MCF 10A (cell line): ENCODE measurements at regions of chr2 and their contacts with region 1.

Region 1: DNA sequence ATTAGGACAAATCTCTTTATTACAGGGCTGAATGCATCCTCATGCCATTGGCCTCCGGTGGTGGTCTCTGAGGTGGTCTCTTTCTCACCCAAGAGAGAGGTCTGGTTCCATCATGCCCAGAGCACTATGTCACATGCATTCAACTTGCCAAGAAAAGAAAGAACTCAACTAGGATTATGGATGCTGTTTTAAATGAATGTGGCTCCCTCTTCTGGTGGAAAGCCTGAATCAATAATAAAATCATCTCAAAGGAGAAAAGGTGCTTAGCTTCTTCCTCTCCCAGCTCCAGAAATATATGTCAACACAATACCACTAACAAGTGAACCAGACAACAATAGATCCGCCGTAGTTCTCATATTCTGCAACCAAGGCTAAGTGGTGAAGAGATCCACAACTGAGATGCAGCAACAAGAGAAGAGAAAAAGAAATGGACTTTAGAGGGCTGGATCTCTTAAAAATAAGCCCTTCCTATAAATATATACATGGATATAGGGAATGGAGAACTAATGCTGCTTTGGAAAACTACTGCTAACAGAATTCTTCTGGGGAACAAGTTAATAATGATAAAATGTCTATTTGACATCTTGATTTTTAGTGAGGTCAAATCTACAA is 396.8 kb downstream of the NCKAP5 start:
- DNase-seq: peak; percentile 62
- H3K4me3 Mint-ChIP-seq: no peak overlapping the region
- H3K27ac Mint-ChIP-seq: no peak overlapping the region
- H3K4me1 Mint-ChIP-seq: no peaks in the 10 kb centered on the region
- H3K27me3 Mint-ChIP-seq: peaks cover 10% of the 10 kb centered on the region
- CTCF ChIP-seq: peak; percentile 57

Region 2: DNA sequence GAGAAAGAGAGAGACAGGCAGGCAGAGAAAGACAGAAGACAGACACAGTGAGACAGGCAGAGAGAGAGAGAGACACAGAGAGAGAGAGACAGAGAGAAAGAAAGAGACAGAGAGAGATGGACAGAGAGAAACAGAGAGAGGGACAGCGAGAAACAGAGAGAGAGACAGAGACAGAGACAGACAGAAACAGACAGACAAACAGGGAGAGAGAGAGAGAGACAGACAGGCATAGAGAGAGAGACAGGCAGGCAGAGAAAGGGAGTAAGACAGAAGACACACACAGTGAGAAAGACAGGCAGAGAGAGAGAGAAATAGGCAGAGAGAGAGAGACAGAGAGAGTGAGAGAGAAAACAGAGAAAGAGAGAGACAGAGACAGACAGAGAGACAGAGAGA is 904.4 kb before region 1 on chr2:
- CTCF ChIA-PET with region 1: interaction called, 7 read pairs
- POLR2A ChIA-PET with region 1: no interaction called
- intact Hi-C with region 1: loop called (anchors 1 kb)
- DNase-seq: no peak
- H3K4me3 Mint-ChIP-seq: no peak overlapping the region
- H3K27ac Mint-ChIP-seq: no peak overlapping the region
- H3K4me1 Mint-ChIP-seq: no peaks in the 10 kb centered on the region
- H3K27me3 Mint-ChIP-seq: no peaks in the 10 kb centered on the region
- CTCF ChIP-seq: no peak

Region 3: DNA sequence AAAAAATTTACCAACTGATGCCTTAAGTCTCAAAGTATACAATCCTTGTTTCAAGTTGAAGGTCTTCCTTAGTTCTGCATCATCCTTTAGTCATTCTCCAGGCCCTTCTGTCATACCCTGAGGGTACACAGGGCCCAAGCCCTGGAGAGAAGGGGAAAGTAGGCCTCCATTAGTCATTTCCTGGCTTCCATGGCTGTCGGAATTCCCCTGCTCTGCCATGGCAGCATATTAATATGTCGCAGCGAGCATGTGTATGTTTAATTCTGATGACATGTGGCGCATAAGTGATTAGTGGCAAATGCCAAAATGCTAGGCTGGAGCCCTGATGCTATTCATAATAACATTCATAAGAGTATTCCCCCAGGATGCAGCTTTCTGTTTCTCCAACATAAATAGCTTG is 732.8 kb before region 1 on chr2:
- CTCF ChIA-PET with region 1: no interaction called
- POLR2A ChIA-PET with region 1: no interaction called
- intact Hi-C with region 1: loop called (anchors 5 kb)
- DNase-seq: peak; percentile 97
- H3K4me3 Mint-ChIP-seq: peak overlapping the region; percentile 55
- H3K27ac Mint-ChIP-seq: peak overlapping the region; percentile 95
- H3K4me1 Mint-ChIP-seq: peaks cover 33% of the 10 kb centered on the region
- H3K27me3 Mint-ChIP-seq: no peaks in the 10 kb centered on the region
- CTCF ChIP-seq: no peak

Region 4: DNA sequence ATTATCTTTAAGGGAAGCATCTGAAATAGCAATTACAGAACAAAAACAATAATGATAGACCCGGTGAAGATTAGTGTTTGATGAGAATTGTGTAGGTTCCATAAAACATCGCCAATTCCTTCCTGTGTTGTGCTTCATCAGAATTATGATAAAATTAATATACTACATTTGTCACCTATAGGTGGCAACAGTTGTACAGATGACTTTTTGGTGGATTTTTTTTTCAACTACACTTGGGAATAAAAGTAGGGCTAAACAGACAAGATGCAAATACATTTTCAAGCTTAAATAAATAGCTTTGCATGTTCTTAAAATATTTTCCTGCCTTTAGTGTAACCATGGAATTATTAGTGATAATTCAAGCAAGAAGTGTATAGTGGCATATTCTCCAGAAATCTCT is 494.5 kb before region 1 on chr2:
- CTCF ChIA-PET with region 1: interaction called, 3 read pairs
- POLR2A ChIA-PET with region 1: no interaction called
- intact Hi-C with region 1: loop called (anchors 5 kb)
- DNase-seq: no peak
- H3K4me3 Mint-ChIP-seq: no peak overlapping the region
- H3K27ac Mint-ChIP-seq: no peak overlapping the region
- H3K4me1 Mint-ChIP-seq: no peaks in the 10 kb centered on the region
- H3K27me3 Mint-ChIP-seq: peaks cover 27% of the 10 kb centered on the region
- CTCF ChIP-seq: peak; percentile 15

Region 5: GRCh38 chr2:133561045-133561852 is 389.8 kb after region 1 on chr2:
- CTCF ChIA-PET with region 1: interaction called, 10 read pairs
- POLR2A ChIA-PET with region 1: no interaction called
- intact Hi-C with region 1: no loop called
- DNase-seq: peak; percentile 14
- H3K4me3 Mint-ChIP-seq: no peak overlapping the region
- H3K27ac Mint-ChIP-seq: no peak overlapping the region
- H3K4me1 Mint-ChIP-seq: no peaks in the 10 kb centered on the region
- H3K27me3 Mint-ChIP-seq: no peaks in the 10 kb centered on the region
- CTCF ChIP-seq: peak; percentile 59

Region 6: GRCh38 chr2:133780099-133780839 is 608.8 kb after region 1 on chr2:
- CTCF ChIA-PET with region 1: no interaction called
- POLR2A ChIA-PET with region 1: no interaction called
- intact Hi-C with region 1: loop called (anchors 10 kb)
- DNase-seq: peak; percentile 74
- H3K4me3 Mint-ChIP-seq: no peak overlapping the region
- H3K27ac Mint-ChIP-seq: no peak overlapping the region
- H3K4me1 Mint-ChIP-seq: no peaks in the 10 kb centered on the region
- H3K27me3 Mint-ChIP-seq: no peaks in the 10 kb centered on the region
- CTCF ChIP-seq: peak; percentile 75